ENCODE measurements at regions of chr1 and their contacts with region 1.

Region 1: GRCh38 chr1:210310562-210311153 is 18.0 kb upstream of the HHAT start:
- DNase-seq: no peak
- CTCF ChIP-seq: no peak

Region 2: DNA sequence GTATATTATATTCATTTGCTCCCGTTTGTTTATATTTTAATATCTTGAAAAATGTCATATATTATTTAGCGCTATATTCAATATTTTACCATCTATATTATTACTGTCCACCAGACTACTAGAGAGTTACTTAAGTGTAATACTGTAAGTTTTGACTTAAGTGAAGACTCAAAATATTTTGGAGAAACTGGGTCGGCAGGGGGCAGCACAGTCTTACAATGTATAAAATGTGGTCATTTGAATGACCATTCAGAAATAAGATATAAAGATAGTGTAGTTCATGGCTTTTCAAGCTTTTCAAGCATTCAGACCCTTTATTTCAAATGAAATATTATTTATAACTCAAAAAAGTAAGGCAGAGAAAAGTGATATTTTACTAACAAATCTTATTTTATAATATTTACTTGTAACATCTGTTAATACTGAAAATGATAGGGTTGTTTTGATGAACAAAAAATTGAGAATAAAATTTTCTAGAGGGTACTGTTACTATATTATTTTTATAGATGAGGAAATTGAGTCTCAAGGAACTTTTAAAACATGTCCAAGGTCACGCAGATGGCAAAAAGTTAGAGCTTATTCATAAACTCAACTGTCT is 167.1 kb before region 1 on chr1:
- CTCF ChIA-PET with region 1: interaction called, 12 read pairs
- POLR2A ChIA-PET with region 1: no interaction called
- DNase-seq: peak; percentile 34
- CTCF ChIP-seq: peak; percentile 65

Measured in GM10248 (cell line).